ENCODE measurements at regions of chr2 and their contacts with region 1.

Region 1: DNA sequence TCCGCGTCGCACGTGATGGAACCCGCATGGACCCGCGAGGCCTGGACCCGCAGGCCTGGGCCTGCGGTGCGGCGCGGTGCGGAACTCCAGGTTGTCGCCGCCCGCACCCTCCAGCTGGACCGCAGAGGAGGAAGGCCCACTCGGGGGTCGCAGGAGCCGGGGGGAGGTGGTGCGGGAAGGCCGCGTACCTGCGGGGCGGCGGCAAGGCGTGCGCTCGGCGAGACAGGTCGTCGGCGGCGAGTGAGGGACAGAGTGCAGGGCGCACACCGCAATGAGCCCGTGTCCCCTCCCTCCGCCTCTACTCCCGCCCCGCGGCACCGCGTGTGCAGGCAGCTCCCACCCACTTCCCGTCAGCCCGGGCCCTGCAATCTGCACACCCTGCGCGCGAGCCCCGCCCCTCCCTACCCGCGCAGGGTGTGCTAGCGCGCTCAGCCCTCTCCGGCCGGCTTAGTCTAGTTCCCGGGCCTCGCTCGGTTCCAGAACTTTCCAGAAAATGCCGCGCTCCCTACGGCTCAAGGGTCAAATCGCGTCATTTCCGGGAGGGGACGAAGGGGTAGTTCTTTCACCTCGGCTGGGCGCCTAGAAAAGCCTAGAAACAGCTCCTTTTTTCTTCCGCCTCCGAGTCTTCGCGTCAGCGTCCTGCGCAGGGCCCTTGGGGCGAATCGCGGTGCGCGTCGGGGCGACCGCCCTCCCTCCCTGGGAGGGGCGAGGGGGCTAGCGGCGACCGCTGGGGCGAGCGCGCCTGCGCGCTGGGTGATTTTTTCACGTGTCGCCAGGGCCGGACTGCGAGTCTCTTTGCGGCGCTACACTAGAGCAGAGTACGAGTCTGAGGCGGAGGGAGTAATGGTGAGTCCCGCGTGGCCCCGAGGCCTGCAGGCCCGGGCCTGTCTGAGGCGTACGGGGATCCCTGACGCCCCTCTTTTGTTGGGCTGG is at the starts of genes HSPD1 and HSPE1:
- DNase-seq: peak; percentile 99
- H3K4me3 ChIP-seq: peak within 1 kb of the TSS; percentile 80 to 92 (median 90)
- H3K27ac ChIP-seq: peak within 1 kb of the TSS; percentile 95 to 99 (median 98)
- H3K4me1 ChIP-seq: peaks cover 36 to 64% (median 51%) of the 10 kb centered on the region in 4 donors
- H3K27me3 ChIP-seq: no peaks in the 10 kb centered on the region
- CTCF ChIP-seq: peak in 2 of 3 experiments; percentile 22 to 42
- EP300 ChIP-seq: peak; percentile 85
- POLR2A ChIP-seq: peak; percentile 96
- total RNA-seq, gene HSPD1: 84.7 to 142 (median 115) TPM
- total RNA-seq, gene HSPE1: 46.7 to 93.4 (median 65.2) TPM

Region 2: DNA sequence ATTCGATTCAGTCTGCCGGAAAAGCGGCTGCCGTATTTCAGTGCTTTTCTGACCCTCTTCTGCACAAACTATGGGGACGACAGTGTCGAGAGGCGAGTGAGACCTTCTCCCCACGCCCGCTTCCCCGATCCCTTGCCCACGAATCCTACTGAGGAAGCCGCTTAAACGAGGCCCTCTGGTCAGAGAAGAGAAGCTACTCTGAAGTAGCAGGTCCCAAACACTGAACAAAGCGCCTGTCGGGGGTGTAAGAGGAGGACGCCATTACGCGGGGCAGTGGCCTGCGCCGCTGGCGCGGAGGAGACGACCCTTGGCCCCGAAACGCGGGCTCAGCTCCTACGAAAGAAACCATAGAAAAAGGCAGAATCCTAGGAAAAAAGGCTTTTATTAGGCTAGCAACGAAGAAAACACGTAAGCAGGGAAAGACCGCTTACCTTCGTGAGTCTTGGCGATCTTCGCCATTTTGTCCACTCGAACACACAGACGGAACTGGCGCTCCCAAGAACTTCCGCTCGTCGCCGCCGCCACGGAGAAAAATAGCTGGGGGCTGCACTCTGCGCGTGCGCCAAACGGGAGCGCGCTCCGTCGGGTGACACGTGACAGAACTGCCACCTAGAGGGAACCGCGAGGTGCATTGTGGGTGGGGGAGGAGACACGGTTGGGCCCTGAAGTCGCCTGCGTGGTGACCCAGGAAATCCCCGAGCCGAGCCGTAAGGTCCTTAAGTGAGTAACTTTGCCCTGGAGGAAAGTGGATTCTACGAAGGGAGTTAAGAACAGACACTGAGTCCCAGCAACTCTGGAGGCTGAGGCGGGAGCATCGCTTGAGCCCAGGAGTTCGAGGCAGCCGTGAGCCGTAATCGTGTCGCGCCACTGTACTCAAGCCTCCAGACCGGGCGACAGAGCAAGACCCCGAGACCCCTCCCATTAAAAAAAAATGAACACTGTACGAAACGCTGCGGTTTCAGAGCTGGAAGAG is 65.0 kb before region 1 on chr2 and contains the start of gene SF3B1:
- intact Hi-C with region 1: loop called (anchors 2 kb)
- DNase-seq: peak; percentile 99
- H3K4me3 ChIP-seq: peak within 1 kb of the TSS; percentile 65 to 93 (median 81)
- H3K27ac ChIP-seq: peak within 1 kb of the TSS; percentile 90 to 97 (median 92)
- H3K4me1 ChIP-seq: peaks cover 41 to 51% (median 49%) of the 10 kb centered on the region in 4 donors
- H3K27me3 ChIP-seq: no peaks in the 10 kb centered on the region
- CTCF ChIP-seq: peak in 1 of 3 experiments; percentile 25
- EP300 ChIP-seq: no peak
- POLR2A ChIP-seq: peak; percentile 83
- total RNA-seq, gene SF3B1: 91.5 to 223 (median 130) TPM

Region 3: GRCh38 chr2:197453161-197453914 is 46.5 kb before region 1 on chr2 and contains the start of gene COQ10B:
- intact Hi-C with region 1: loop called (anchors 2 kb)
- DNase-seq: peak; percentile 100
- H3K4me3 ChIP-seq: peak within 1 kb of the TSS; percentile 75 to 87 (median 80)
- H3K27ac ChIP-seq: peak within 1 kb of the TSS; percentile 97 to 100 (median 100)
- H3K4me1 ChIP-seq: peaks cover 17 to 44% (median 34%) of the 10 kb centered on the region in 4 donors
- H3K27me3 ChIP-seq: no peaks in the 10 kb centered on the region
- CTCF ChIP-seq: peak; percentile 26 to 38 (median 32)
- EP300 ChIP-seq: peak; percentile 73
- POLR2A ChIP-seq: peak; percentile 74
- total RNA-seq, gene COQ10B: 27.0 to 58.8 (median 43.8) TPM

Measured in esophagus muscularis mucosa (tissue), 4 donors.